ENCODE measurements at regions of chr10 and their contacts with region 1.

Region 1: GRCh38 chr10:110007701-110008517 is at the start of gene ADD3:
- DNase-seq: peak; percentile 89 to 93 (median 91)
- H3K4me3 ChIP-seq: peak within 1 kb of the TSS; percentile 61 to 88
- H3K4me3 Mint-ChIP-seq: peak within 1 kb of the TSS in 3 of 8 donors; percentile 98 to 100 (median 100)
- H3K27ac ChIP-seq: peak within 1 kb of the TSS; percentile 81
- H3K27ac Mint-ChIP-seq: peak within 1 kb of the TSS in 6 of 7 donors; percentile 88 to 99 (median 96)
- H3K4me1 ChIP-seq: peaks cover 42% of the 10 kb centered on the region
- H3K4me1 Mint-ChIP-seq: peaks cover 19 to 48% (median 39%) of the 10 kb centered on the region in 4 donors
- H3K27me3 ChIP-seq: no peaks in the 10 kb centered on the region
- H3K27me3 Mint-ChIP-seq: no peaks in the 10 kb centered on the region
- total RNA-seq, gene ADD3: 365 to 374 TPM

Region 2: GRCh38 chr10:109922976-109923921 is 84.7 kb before region 1 on chr10 and contains the start of gene XPNPEP1:
- CTCF ChIA-PET with region 1: no interaction called
- POLR2A ChIA-PET with region 1: interaction called, 4 read pairs
- intact Hi-C with region 1: loop called (anchors 1 kb)
- DNase-seq: peak; percentile 75 to 83 (median 79)
- H3K4me3 ChIP-seq: peak within 1 kb of the TSS; percentile 68 to 74
- H3K4me3 Mint-ChIP-seq: peak within 1 kb of the TSS; percentile 88 to 95 (median 92)
- H3K27ac ChIP-seq: peak within 1 kb of the TSS; percentile 86
- H3K27ac Mint-ChIP-seq: peak within 1 kb of the TSS; percentile 86 to 98 (median 96)
- H3K4me1 ChIP-seq: peaks cover 54% of the 10 kb centered on the region
- H3K4me1 Mint-ChIP-seq: peaks cover 39 to 57% (median 47%) of the 10 kb centered on the region in 4 donors
- H3K27me3 ChIP-seq: no peaks in the 10 kb centered on the region
- H3K27me3 Mint-ChIP-seq: no peaks in the 10 kb centered on the region
- total RNA-seq, gene XPNPEP1: 59.0 to 63.3 TPM

Region 3: DNA sequence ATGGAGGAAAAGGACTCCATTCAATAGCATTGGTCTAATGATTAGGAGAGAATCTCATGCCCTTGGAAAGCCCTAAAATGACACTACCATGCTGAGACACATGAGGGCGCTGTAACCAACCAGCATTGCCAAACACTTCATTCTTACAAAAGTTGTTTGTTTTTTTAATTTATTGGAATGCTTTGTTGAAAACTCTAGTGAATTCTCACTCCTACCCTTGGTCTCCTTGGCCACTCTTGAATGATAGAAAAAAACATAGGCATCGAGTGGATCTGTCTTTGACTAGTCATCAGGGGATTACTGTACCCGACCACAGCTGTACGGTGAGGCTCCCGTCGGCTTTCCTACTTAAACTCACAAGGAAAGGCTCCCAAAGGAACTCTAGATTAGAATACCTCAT is 29.4 kb before region 1 on chr10:
- CTCF ChIA-PET with region 1: interaction called, 10 read pairs
- POLR2A ChIA-PET with region 1: interaction called, 4 read pairs
- intact Hi-C with region 1: loop called (anchors 2 kb)
- DNase-seq: peak; percentile 51 to 63 (median 58)
- H3K4me3 ChIP-seq: no peak overlapping the region
- H3K4me3 Mint-ChIP-seq: no peak overlapping the region
- H3K27ac ChIP-seq: no peak overlapping the region
- H3K27ac Mint-ChIP-seq: no peak overlapping the region
- H3K4me1 ChIP-seq: no peaks in the 10 kb centered on the region
- H3K4me1 Mint-ChIP-seq: peaks cover 0 to 5% (median under 1%) of the 10 kb centered on the region in 4 donors
- H3K27me3 ChIP-seq: no peaks in the 10 kb centered on the region
- H3K27me3 Mint-ChIP-seq: no peaks in the 10 kb centered on the region

Region 4: GRCh38 chr10:110076559-110077318 is 68.8 kb after region 1 on chr10:
- CTCF ChIA-PET with region 1: interaction called, 10 read pairs
- POLR2A ChIA-PET with region 1: interaction called, 116 read pairs
- intact Hi-C with region 1: loop called (anchors 1 kb)
- DNase-seq: peak; percentile 59 to 73 (median 66)
- H3K4me3 ChIP-seq: peak overlapping the region; percentile 48 to 53
- H3K4me3 Mint-ChIP-seq: peak overlapping the region; percentile 87 to 96 (median 92)
- H3K27ac ChIP-seq: peak overlapping the region; percentile 59
- H3K27ac Mint-ChIP-seq: peak overlapping the region; percentile 89 to 98 (median 92)
- H3K4me1 ChIP-seq: peaks cover 100% of the 10 kb centered on the region
- H3K4me1 Mint-ChIP-seq: peaks cover 69 to 92% (median 81%) of the 10 kb centered on the region in 4 donors
- H3K27me3 ChIP-seq: no peaks in the 10 kb centered on the region
- H3K27me3 Mint-ChIP-seq: no peaks in the 10 kb centered on the region

Region 5: DNA sequence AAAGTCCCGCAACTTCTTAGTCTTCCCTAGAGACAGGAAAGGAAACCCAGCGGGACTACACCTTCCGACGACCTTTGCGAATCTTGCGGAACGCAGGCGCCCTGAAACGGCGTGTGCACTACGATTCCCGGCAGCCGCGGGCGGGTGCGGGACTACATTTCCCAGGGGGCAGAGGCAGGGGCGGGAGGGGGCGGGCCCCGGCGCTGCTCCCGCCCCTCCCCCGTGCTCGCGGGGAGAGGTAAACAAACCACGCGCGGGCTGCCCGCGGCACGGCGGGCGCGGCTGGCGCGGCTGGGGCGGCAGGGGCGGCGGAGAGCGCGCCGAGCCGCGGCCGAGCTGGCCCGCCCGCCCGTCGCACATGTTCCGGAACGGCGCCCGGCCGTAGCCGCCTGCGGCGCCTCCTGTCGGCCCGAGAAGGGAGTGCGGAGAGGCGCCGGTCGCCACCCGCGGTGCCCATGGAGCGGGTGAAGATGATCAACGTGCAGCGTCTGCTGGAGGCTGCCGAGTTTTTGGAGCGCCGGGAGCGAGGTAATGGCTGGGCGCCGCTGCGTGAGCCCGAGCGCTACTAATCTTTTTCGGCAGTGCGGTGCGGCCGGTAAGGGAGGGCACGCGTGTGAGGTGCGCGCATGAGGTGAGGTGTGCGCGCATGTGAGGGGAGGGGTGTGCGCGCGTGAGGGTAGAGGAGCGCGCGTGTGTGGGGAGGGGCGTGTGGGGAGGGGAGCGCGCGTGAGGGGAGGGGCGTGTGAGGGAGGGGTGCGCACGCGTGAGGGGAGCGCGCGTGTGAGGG is 218.0 kb after region 1 on chr10:
- CTCF ChIA-PET with region 1: no interaction called
- POLR2A ChIA-PET with region 1: no interaction called
- intact Hi-C with region 1: loop called (anchors 1 kb)
- DNase-seq: peak; percentile 88 to 90 (median 89)
- H3K4me3 ChIP-seq: peak overlapping the region; percentile 39 to 82
- H3K4me3 Mint-ChIP-seq: peak overlapping the region; percentile 92 to 96 (median 94)
- H3K27ac ChIP-seq: peak overlapping the region; percentile 67
- H3K27ac Mint-ChIP-seq: peak overlapping the region; percentile 91 to 96 (median 96)
- H3K4me1 ChIP-seq: peaks cover 29% of the 10 kb centered on the region
- H3K4me1 Mint-ChIP-seq: peaks cover 27 to 62% (median 42%) of the 10 kb centered on the region in 4 donors
- H3K27me3 ChIP-seq: no peaks in the 10 kb centered on the region
- H3K27me3 Mint-ChIP-seq: no peaks in the 10 kb centered on the region

Region 6: DNA sequence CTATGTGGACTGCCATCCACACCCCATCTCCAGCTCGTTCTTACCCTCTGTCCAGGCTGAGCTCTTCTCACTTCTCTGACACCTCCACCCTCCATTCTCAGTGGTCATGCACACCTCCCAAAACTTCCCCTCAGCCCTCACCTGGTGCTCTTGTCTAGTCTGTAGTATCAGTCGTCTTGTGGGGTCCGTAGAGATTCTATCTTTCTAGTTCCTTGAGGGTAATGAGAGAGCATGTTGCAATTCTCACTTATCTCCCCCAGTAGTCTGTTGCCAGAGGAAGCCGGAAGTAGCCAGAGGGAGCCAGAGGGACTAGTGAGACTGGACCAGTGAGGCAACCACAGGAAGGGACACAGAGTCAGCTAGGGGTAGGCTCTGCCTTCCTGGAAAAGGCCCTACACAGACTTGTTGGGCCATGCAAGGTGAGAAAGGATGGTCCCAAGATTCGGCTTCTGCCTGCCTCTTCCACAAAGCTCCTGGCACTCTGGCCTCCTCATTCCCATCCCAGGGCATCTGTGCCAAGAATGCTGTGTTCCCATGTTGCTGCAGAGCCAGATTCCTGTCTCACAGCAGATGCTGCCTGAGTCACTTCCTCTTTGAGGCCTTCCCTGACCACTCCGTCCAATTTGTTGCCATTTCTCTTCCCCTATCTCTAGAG is 439.2 kb after region 1 on chr10:
- CTCF ChIA-PET with region 1: no interaction called
- POLR2A ChIA-PET with region 1: no interaction called
- intact Hi-C with region 1: no loop called
- DNase-seq: no peak
- H3K4me3 ChIP-seq: no peak overlapping the region
- H3K4me3 Mint-ChIP-seq: peak overlapping the region in 1 of 8 donors; percentile 27
- H3K27ac ChIP-seq: no peak overlapping the region
- H3K27ac Mint-ChIP-seq: peak overlapping the region in 2 of 7 donors; percentile 5 to 54
- H3K4me1 ChIP-seq: peaks cover 3% of the 10 kb centered on the region
- H3K4me1 Mint-ChIP-seq: peaks cover 0 to 7% (median 3%) of the 10 kb centered on the region in 4 donors
- H3K27me3 ChIP-seq: no peaks in the 10 kb centered on the region
- H3K27me3 Mint-ChIP-seq: no peaks in the 10 kb centered on the region

Region 7: GRCh38 chr10:110567201-110568054 is 559.5 kb after region 1 on chr10 and contains the start of gene SMC3:
- CTCF ChIA-PET with region 1: no interaction called
- POLR2A ChIA-PET with region 1: no interaction called
- intact Hi-C with region 1: loop called (anchors 1 kb)
- DNase-seq: peak; percentile 91 to 96 (median 93)
- H3K4me3 ChIP-seq: peak within 1 kb of the TSS; percentile 72 to 93
- H3K4me3 Mint-ChIP-seq: peak within 1 kb of the TSS; percentile 91 to 97 (median 96)
- H3K27ac ChIP-seq: peak within 1 kb of the TSS; percentile 90
- H3K27ac Mint-ChIP-seq: peak within 1 kb of the TSS; percentile 95 to 99 (median 98)
- H3K4me1 ChIP-seq: peaks cover 45% of the 10 kb centered on the region
- H3K4me1 Mint-ChIP-seq: peaks cover 26 to 51% (median 36%) of the 10 kb centered on the region in 4 donors
- H3K27me3 ChIP-seq: no peaks in the 10 kb centered on the region
- H3K27me3 Mint-ChIP-seq: peaks cover 1 to 12% of the 10 kb centered on the region in 2 donors
- total RNA-seq, gene SMC3: 53.4 to 59.5 TPM

Measured in CD4-positive, alpha-beta memory T cell (primary cell).